Colonic mucosa (tissue), 4 donors: ENCODE measurements at regions of chr20 and their contacts with region 1.

Region 1: GRCh38 chr20:57654363-57654997 is 34.3 kb upstream of the ZBP1 start:
- DNase-seq: peak; percentile 61
- H3K4me3 ChIP-seq: no peak overlapping the region
- H3K27ac ChIP-seq: no peak overlapping the region
- H3K4me1 ChIP-seq: no peaks in the 10 kb centered on the region
- H3K27me3 ChIP-seq: no peaks in the 10 kb centered on the region
- CTCF ChIP-seq: peak; percentile 89

Region 2: DNA sequence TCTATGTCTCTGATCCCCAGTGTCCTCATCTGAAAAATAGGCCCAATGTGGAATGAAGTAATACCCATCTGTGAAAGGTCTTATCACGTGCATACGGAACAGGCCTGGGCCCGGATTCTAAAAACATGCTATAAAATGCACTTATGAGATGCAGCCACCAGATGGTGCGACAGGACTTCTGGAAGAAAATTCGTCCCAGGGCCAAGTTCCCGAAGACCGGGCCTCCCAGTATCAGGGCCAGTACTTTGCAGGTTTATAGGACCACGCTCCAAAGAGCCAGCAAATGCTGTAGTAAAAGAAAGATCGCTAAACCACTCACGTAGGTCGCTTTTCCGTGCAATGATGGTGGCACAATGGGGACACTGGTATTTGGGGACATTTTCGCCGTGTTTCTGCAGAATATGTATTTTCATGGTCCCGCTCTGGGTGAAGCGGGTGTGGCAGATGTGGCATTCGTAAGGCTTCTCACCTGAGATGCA is 140.2 kb before region 1 on chr20:
- intact Hi-C with region 1: no loop called
- DNase-seq: peak; percentile 79
- H3K4me3 ChIP-seq: no peak overlapping the region
- H3K27ac ChIP-seq: no peak overlapping the region
- H3K4me1 ChIP-seq: no peaks in the 10 kb centered on the region
- H3K27me3 ChIP-seq: no peaks in the 10 kb centered on the region
- CTCF ChIP-seq: peak; percentile 69

Region 3: GRCh38 chr20:58087193-58087858 is 432.8 kb after region 1 on chr20:
- intact Hi-C with region 1: loop called (anchors 2 kb)
- DNase-seq: peak; percentile 52
- H3K4me3 ChIP-seq: no peak overlapping the region
- H3K27ac ChIP-seq: no peak overlapping the region
- H3K4me1 ChIP-seq: no peaks in the 10 kb centered on the region
- H3K27me3 ChIP-seq: no peaks in the 10 kb centered on the region
- CTCF ChIP-seq: peak; percentile 83